ENCODE measurements at regions of chr3 and their contacts with region 1.

Region 1: GRCh38 chr3:186540221-186540834 is 3.9 kb downstream of the CRYGS start:
- DNase-seq: peak; percentile 89
- ATAC-seq: peak; percentile 84
- H3K4me3 ChIP-seq: peak overlapping the region in 1 of 5 experiments; percentile 23
- H3K4me3 Mint-ChIP-seq: no peak overlapping the region
- H3K27ac ChIP-seq: no peak overlapping the region
- H3K27ac Mint-ChIP-seq: no peak overlapping the region
- H3K4me1 ChIP-seq: peaks cover 8 to 19% of the 10 kb centered on the region in 2 donors
- H3K4me1 Mint-ChIP-seq: peaks cover 25% of the 10 kb centered on the region
- H3K27me3 ChIP-seq: peaks cover 0 to 11% (median 5%) of the 10 kb centered on the region in 4 experiments
- H3K27me3 Mint-ChIP-seq: no peaks in the 10 kb centered on the region
- CTCF ChIP-seq: peak; percentile 82

Region 2: DNA sequence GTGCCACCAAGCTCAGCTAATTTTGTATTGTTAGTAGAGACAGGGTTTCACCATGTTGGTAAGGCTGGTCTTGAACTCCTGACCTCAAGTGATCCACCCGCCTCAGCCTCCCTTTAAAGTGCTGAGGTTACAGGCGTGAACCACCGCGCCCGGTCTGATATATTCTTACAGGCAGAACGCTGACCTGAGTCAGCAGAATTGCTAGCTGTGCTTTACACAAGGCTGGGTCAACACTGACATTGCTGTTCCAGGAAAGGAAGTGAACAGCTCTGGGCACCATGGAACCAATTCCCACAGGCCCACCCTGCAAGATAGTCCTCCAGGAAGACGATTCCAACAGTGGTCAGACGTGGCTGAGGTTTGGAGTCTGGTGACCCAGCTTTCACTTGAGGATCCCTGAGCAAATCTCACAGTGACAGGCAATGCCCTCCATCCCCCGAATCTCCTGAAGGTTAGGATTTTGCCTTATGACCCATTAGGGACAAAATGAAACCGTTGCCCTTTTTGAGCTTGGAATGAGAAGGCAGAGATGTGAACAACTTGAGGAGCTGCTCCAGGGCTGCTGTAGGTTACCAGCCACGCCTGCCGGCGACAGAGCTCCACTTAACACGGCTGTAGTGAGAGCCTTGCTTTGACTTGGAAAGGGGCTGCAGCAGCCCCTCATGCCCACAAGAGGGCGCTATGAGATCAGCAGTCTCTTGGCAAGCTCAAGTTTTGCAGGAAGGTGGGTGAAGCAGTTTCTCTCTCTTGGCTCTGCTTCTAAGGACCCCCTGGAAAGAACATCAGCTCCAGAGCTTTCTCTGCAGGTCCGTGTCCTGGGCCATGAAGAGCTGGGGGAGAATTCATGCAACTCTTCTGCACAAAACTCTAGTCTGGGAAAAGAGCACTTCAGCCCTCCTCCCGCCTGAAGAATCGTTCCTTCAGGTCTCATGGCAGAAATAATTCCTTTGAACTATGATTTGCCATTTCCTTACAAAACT is 880.1 kb before region 1 on chr3:
- CTCF ChIA-PET with region 1: no interaction called
- POLR2A ChIA-PET with region 1: no interaction called
- intact Hi-C with region 1: loop called (anchors 10 kb)
- DNase-seq: peak; percentile 74
- ATAC-seq: peak; percentile 74
- H3K4me3 ChIP-seq: no peak overlapping the region
- H3K4me3 Mint-ChIP-seq: no peak overlapping the region
- H3K27ac ChIP-seq: no peak overlapping the region
- H3K27ac Mint-ChIP-seq: no peak overlapping the region
- H3K4me1 ChIP-seq: peaks cover 3 to 4% of the 10 kb centered on the region in 2 donors
- H3K4me1 Mint-ChIP-seq: no peaks in the 10 kb centered on the region
- H3K27me3 ChIP-seq: peaks cover 0 to 3% (median 0%) of the 10 kb centered on the region in 4 experiments
- H3K27me3 Mint-ChIP-seq: peaks cover 21% of the 10 kb centered on the region
- CTCF ChIP-seq: peak; percentile 91

Region 3: GRCh38 chr3:185983495-185984141 is 556.7 kb before region 1 on chr3:
- CTCF ChIA-PET with region 1: interaction called, 203 read pairs
- POLR2A ChIA-PET with region 1: no interaction called
- intact Hi-C with region 1: loop called (anchors 1 kb)
- DNase-seq: peak; percentile 77
- ATAC-seq: peak; percentile 84
- H3K4me3 ChIP-seq: no peak overlapping the region
- H3K4me3 Mint-ChIP-seq: no peak overlapping the region
- H3K27ac ChIP-seq: no peak overlapping the region
- H3K27ac Mint-ChIP-seq: no peak overlapping the region
- H3K4me1 ChIP-seq: peaks cover 6 to 8% of the 10 kb centered on the region in 2 donors
- H3K4me1 Mint-ChIP-seq: no peaks in the 10 kb centered on the region
- H3K27me3 ChIP-seq: peaks cover 0 to 16% (median 2%) of the 10 kb centered on the region in 4 experiments
- H3K27me3 Mint-ChIP-seq: peaks cover 10% of the 10 kb centered on the region
- CTCF ChIP-seq: peak; percentile 94

Region 4: GRCh38 chr3:186259612-186260383 is 280.5 kb before region 1 on chr3:
- CTCF ChIA-PET with region 1: interaction called, 559 read pairs
- POLR2A ChIA-PET with region 1: interaction called, 5 read pairs
- intact Hi-C with region 1: loop called (anchors 1 kb)
- DNase-seq: peak; percentile 80
- ATAC-seq: peak; percentile 65
- H3K4me3 ChIP-seq: no peak overlapping the region
- H3K4me3 Mint-ChIP-seq: peak overlapping the region; percentile 10
- H3K27ac ChIP-seq: no peak overlapping the region
- H3K27ac Mint-ChIP-seq: peak overlapping the region; percentile 41
- H3K4me1 ChIP-seq: peaks cover 31 to 35% of the 10 kb centered on the region in 2 donors
- H3K4me1 Mint-ChIP-seq: peaks cover 43% of the 10 kb centered on the region
- H3K27me3 ChIP-seq: no peaks in the 10 kb centered on the region
- H3K27me3 Mint-ChIP-seq: no peaks in the 10 kb centered on the region
- CTCF ChIP-seq: peak; percentile 81

Region 5: GRCh38 chr3:186464424-186465093 is 75.8 kb before region 1 on chr3:
- CTCF ChIA-PET with region 1: interaction called, 13 read pairs
- POLR2A ChIA-PET with region 1: no interaction called
- intact Hi-C with region 1: no loop called
- DNase-seq: peak; percentile 11
- ATAC-seq: no peak
- H3K4me3 ChIP-seq: no peak overlapping the region
- H3K4me3 Mint-ChIP-seq: no peak overlapping the region
- H3K27ac ChIP-seq: no peak overlapping the region
- H3K27ac Mint-ChIP-seq: no peak overlapping the region
- H3K4me1 ChIP-seq: no peaks in the 10 kb centered on the region
- H3K4me1 Mint-ChIP-seq: no peaks in the 10 kb centered on the region
- H3K27me3 ChIP-seq: no peaks in the 10 kb centered on the region
- H3K27me3 Mint-ChIP-seq: peaks cover 2% of the 10 kb centered on the region
- CTCF ChIP-seq: no peak

Region 6: GRCh38 chr3:186514296-186515002 is 25.9 kb before region 1 on chr3:
- CTCF ChIA-PET with region 1: interaction called, 56 read pairs
- POLR2A ChIA-PET with region 1: interaction called, 3 read pairs
- intact Hi-C with region 1: loop called (anchors 2 kb)
- DNase-seq: no peak
- ATAC-seq: no peak
- H3K4me3 ChIP-seq: no peak overlapping the region
- H3K4me3 Mint-ChIP-seq: no peak overlapping the region
- H3K27ac ChIP-seq: no peak overlapping the region
- H3K27ac Mint-ChIP-seq: peak overlapping the region; percentile 12
- H3K4me1 ChIP-seq: peaks cover 32 to 42% of the 10 kb centered on the region in 2 donors
- H3K4me1 Mint-ChIP-seq: peaks cover 60% of the 10 kb centered on the region
- H3K27me3 ChIP-seq: peaks cover 0 to 16% (median 0%) of the 10 kb centered on the region in 4 experiments
- H3K27me3 Mint-ChIP-seq: peaks cover 3% of the 10 kb centered on the region
- CTCF ChIP-seq: peak; percentile 21

Region 7: GRCh38 chr3:186570096-186570940 is 30.0 kb after region 1 on chr3 and contains the start of gene DNAJB11:
- CTCF ChIA-PET with region 1: interaction called, 14 read pairs
- POLR2A ChIA-PET with region 1: no interaction called
- intact Hi-C with region 1: no loop called
- DNase-seq: peak; percentile 99
- ATAC-seq: peak; percentile 85
- H3K4me3 ChIP-seq: peak within 1 kb of the TSS; percentile 86 to 98 (median 90)
- H3K4me3 Mint-ChIP-seq: peak within 1 kb of the TSS; percentile 98
- H3K27ac ChIP-seq: peak within 1 kb of the TSS; percentile 91 to 96
- H3K27ac Mint-ChIP-seq: peak within 1 kb of the TSS; percentile 98
- H3K4me1 ChIP-seq: peaks cover 28 to 40% of the 10 kb centered on the region in 2 donors
- H3K4me1 Mint-ChIP-seq: peaks cover 51% of the 10 kb centered on the region
- H3K27me3 ChIP-seq: no peaks in the 10 kb centered on the region
- H3K27me3 Mint-ChIP-seq: no peaks in the 10 kb centered on the region
- CTCF ChIP-seq: no peak
- total RNA-seq, gene DNAJB11: 27.7 and 28.5 TPM in 2 replicates